ENCODE measurements at regions of chr12 and their contacts with region 1.

Region 1: DNA sequence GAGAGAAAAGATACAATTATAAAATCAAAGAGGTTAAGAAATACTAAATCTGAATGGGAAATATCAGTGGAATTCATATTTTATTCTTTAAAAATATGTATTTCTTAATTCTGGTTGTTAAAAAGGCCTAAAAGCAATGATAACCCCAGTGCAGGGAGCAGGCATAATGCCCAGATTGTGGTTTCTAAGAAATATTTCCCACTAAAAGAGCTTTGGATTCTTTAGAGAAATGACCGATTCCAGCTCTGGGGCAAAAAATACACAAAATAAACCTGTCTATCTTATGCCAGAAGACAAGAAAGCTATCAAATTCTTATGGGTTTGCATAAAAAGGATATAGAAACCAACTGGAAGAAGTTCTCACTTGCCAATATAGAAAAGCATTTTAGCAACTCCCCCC is 71.6 kb downstream of the PDE6H start:
- DNase-seq: no peak
- ATAC-seq: no peak
- H3K4me3 ChIP-seq: no peak overlapping the region
- H3K27ac ChIP-seq: no peak overlapping the region
- H3K4me1 ChIP-seq: no peaks in the 10 kb centered on the region
- H3K27me3 ChIP-seq: peaks cover 70% of the 10 kb centered on the region
- CTCF ChIP-seq: no peak
- POLR2A ChIP-seq: no peak
- RAD21 ChIP-seq: no peak

Region 2: DNA sequence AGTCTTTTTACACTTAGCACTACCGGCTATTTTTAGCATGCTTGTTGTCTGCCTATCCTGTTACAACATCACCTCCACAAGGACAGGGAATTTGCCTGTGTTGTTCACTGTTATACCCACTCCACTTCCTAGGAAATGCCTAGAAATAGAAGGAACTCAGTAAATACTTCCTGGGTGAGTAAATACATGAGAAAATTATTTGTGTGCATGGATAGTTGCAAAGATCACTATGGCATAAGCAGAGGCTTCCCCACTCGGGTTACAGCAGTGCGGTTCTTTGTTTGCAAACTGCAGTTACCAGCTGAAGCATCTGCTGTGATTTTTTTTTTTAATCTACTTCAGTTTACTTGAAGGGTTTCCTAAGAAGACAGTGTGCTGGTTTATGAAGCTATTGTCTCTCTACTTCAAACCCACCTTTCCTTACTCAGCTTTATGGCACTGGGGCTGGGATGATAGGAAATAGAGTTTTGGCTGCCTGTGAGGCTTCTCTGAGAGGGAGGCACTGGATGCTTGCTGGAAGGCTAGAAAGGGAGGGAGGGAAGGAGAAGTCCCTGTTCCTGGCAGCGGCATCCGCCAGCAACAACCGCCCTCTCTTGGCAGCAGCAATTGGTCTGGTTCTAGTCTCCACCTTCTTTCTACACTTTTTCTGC is 42.6 kb before region 1 on chr12:
- CTCF ChIA-PET with region 1: no interaction called
- POLR2A ChIA-PET with region 1: no interaction called
- RAD21 ChIA-PET with region 1: no interaction called
- intact Hi-C with region 1: no loop called
- DNase-seq: no peak
- ATAC-seq: no peak
- H3K4me3 ChIP-seq: no peak overlapping the region
- H3K27ac ChIP-seq: no peak overlapping the region
- H3K4me1 ChIP-seq: no peaks in the 10 kb centered on the region
- H3K27me3 ChIP-seq: peaks cover 64% of the 10 kb centered on the region
- CTCF ChIP-seq: no peak
- POLR2A ChIP-seq: no peak
- RAD21 ChIP-seq: no peak

Region 3: GRCh38 chr12:15074351-15074750 is 29.9 kb after region 1 on chr12:
- CTCF ChIA-PET with region 1: no interaction called
- POLR2A ChIA-PET with region 1: no interaction called
- RAD21 ChIA-PET with region 1: no interaction called
- intact Hi-C with region 1: loop called (anchors 5 kb)
- DNase-seq: no peak
- ATAC-seq: no peak
- H3K4me3 ChIP-seq: no peak overlapping the region
- H3K27ac ChIP-seq: no peak overlapping the region
- H3K4me1 ChIP-seq: no peaks in the 10 kb centered on the region
- H3K27me3 ChIP-seq: peaks cover 37% of the 10 kb centered on the region
- CTCF ChIP-seq: no peak
- POLR2A ChIP-seq: no peak
- RAD21 ChIP-seq: no peak